ENCODE measurements at regions of chr14 and their contacts with region 1.

Region 1: GRCh38 chr14:59507063-59507780 is 22.9 kb downstream of the JKAMP start:
- DNase-seq: peak in 8 of 9 donors; percentile 9 to 47 (median 34)
- ATAC-seq: peak; percentile 90
- H3K4me3 ChIP-seq: no peak overlapping the region
- H3K4me3 Mint-ChIP-seq: no peak overlapping the region
- H3K27ac ChIP-seq: no peak overlapping the region
- H3K27ac Mint-ChIP-seq: no peak overlapping the region
- H3K4me1 ChIP-seq: peaks cover 0 to 4% of the 10 kb centered on the region in 2 donors
- H3K4me1 Mint-ChIP-seq: peaks cover 3 to 17% (median 15%) of the 10 kb centered on the region in 7 donors
- H3K27me3 ChIP-seq: no peaks in the 10 kb centered on the region
- H3K27me3 Mint-ChIP-seq: peaks cover 8 to 18% (median 13%) of the 10 kb centered on the region in 5 donors

Region 2: GRCh38 chr14:59464486-59465315 is 42.5 kb before region 1 on chr14:
- CTCF ChIA-PET with region 1: no interaction called
- POLR2A ChIA-PET with region 1: no interaction called
- intact Hi-C with region 1: loop called in 1 of 2 experiments (anchors 1 kb)
- DNase-seq: peak; percentile 40 to 71 (median 59)
- ATAC-seq: peak; percentile 78
- H3K4me3 ChIP-seq: peak overlapping the region; percentile 66
- H3K4me3 Mint-ChIP-seq: peak overlapping the region; percentile 85 to 94 (median 90)
- H3K27ac ChIP-seq: peak overlapping the region; percentile 65
- H3K27ac Mint-ChIP-seq: peak overlapping the region in 5 of 9 donors; percentile 60 to 82 (median 72)
- H3K4me1 ChIP-seq: peaks cover 0 to 9% of the 10 kb centered on the region in 2 donors
- H3K4me1 Mint-ChIP-seq: peaks cover 0 to 17% (median 7%) of the 10 kb centered on the region in 7 donors
- H3K27me3 ChIP-seq: no peaks in the 10 kb centered on the region
- H3K27me3 Mint-ChIP-seq: peaks cover 8 to 16% (median 12%) of the 10 kb centered on the region in 5 donors

Region 3: GRCh38 chr14:59478540-59478939 is 28.7 kb before region 1 on chr14:
- CTCF ChIA-PET with region 1: no interaction called
- POLR2A ChIA-PET with region 1: no interaction called
- intact Hi-C with region 1: no loop called
- DNase-seq: no peak
- ATAC-seq: no peak
- H3K4me3 ChIP-seq: no peak overlapping the region
- H3K4me3 Mint-ChIP-seq: no peak overlapping the region
- H3K27ac ChIP-seq: no peak overlapping the region
- H3K27ac Mint-ChIP-seq: no peak overlapping the region
- H3K4me1 ChIP-seq: peaks cover 12 to 13% of the 10 kb centered on the region in 2 donors
- H3K4me1 Mint-ChIP-seq: peaks cover 17 to 63% (median 57%) of the 10 kb centered on the region in 7 donors
- H3K27me3 ChIP-seq: no peaks in the 10 kb centered on the region
- H3K27me3 Mint-ChIP-seq: no peaks in the 10 kb centered on the region

Region 4: DNA sequence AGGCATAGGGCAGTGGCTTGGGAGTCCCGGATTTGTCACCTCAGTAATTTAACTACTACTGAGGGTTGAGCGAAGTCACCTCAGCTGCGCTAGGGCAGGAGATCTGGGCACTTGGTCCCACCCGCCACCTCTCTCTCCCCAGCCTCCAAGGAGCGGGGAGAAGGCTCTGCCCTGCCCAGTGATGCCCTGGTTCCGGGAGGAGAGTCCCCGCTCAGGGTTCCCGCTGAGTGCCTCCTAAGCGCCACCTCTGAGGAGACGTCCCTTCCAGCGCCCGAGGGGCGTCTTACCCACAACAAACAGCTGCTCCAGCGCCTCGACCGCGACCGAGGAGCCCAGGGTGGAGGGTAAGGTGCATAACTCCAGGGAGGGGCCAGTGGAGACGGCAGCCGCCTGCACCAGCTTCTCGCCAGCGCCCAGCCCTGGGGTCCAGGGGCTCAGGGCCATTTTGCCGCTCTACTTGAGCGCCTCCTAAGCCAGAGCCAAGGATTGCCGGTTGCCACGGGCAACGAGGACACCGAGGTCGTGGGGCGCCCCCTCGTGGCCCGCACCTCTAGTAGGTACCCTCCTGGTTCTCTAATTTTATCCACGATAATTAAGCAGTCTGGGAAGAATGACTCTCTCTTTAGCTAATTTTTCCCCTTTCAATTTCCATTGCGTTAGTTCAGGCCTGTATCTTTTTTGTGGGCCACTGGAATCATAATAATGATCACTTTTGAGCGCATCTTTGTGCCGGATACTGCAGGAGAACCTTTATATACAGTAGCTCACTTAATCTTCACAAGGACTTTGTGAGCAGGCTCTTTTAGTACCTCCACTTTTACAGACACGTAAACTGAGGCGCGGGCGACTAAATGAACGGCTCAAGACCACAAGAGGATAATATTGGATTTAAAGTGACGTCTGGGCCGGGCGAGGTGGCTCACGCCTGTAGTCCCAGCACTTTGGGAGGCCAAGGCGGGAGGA is 69.4 kb after region 1 on chr14 and contains the start of gene CCDC175:
- CTCF ChIA-PET with region 1: no interaction called
- POLR2A ChIA-PET with region 1: no interaction called
- intact Hi-C with region 1: loop called (anchors 1 kb)
- DNase-seq: peak; percentile 66 to 84 (median 78)
- ATAC-seq: peak; percentile 98
- H3K4me3 ChIP-seq: peak within 1 kb of the TSS; percentile 63
- H3K4me3 Mint-ChIP-seq: peak within 1 kb of the TSS; percentile 66 to 86 (median 78)
- H3K27ac ChIP-seq: no peak within 1 kb of the TSS
- H3K27ac Mint-ChIP-seq: peak within 1 kb of the TSS in 3 of 9 donors; percentile 8 to 26 (median 14)
- H3K4me1 ChIP-seq: peaks cover 3 to 4% of the 10 kb centered on the region in 2 donors
- H3K4me1 Mint-ChIP-seq: peaks cover 4 to 9% (median 7%) of the 10 kb centered on the region in 7 donors
- H3K27me3 ChIP-seq: no peaks in the 10 kb centered on the region
- H3K27me3 Mint-ChIP-seq: peaks cover 20 to 46% (median 29%) of the 10 kb centered on the region in 5 donors
- total RNA-seq, gene CCDC175: not detected

Region 5: DNA sequence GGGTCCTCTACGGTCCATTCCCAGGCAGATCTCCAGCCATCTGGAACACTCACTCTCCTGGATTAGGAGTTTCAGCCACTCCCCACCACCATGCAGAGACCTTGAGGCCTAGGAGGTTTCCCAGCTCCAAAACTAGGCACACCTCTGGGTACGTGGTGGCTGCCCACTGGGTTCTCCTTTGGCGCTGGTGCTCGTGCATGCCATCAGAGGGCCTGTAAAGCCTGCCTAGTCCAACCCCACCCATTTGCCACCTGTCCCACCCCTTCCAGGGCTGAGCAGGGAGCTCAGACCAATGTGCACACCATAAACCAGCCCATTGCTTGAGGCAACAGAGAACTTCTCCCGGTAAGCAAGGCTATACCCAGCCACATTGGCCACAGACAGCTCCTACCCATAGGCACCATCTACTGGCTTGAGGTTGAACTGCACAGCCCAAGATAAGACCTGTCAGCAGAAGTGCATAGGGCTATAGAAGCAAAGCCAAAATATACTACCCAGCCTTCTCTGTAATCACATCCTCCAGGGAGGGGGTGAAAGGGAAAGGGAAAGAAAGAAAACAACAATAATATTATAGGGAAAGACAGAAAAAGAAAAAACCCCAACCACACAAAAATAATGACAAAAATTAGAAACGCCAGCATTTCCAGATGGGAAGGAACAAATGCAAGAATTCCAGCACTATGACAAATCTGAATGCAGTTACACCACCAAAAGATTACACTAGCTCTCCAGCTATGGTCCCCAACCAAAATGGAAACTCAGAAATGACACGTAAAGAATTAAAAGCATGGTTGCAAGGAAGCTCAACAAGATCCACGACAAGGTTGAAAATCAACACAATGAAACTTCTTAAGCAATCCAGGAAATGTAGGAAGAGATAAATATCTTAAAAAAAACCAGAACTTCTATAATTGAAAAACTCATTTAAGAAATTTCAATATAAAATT is 181.3 kb after region 1 on chr14:
- CTCF ChIA-PET with region 1: no interaction called
- POLR2A ChIA-PET with region 1: no interaction called
- intact Hi-C with region 1: loop called in 1 of 2 experiments (anchors 5 kb)
- DNase-seq: no peak
- ATAC-seq: peak; percentile 64
- H3K4me3 ChIP-seq: no peak overlapping the region
- H3K4me3 Mint-ChIP-seq: no peak overlapping the region
- H3K27ac ChIP-seq: no peak overlapping the region
- H3K27ac Mint-ChIP-seq: no peak overlapping the region
- H3K4me1 ChIP-seq: no peaks in the 10 kb centered on the region
- H3K4me1 Mint-ChIP-seq: no peaks in the 10 kb centered on the region
- H3K27me3 ChIP-seq: no peaks in the 10 kb centered on the region
- H3K27me3 Mint-ChIP-seq: peaks cover 12 to 51% (median 29%) of the 10 kb centered on the region in 5 donors

Region 6: DNA sequence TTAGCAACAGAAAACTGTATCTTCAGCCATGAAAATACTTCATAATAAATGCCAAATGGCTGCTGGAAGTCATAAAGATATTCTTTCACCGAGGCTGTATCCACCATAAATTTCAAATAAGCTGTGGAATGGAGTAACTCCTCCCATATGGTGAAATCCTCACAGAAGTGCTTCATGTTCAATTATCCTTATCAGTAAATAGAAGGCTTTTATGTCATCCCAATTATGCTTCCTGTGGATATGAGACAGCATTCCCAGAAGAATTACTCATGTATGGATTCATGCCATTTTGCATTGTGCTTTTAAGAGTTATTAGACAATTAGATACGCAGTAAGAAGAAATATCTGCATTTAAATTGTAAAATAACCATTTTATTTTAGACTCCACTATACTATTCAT is 264.4 kb after region 1 on chr14:
- CTCF ChIA-PET with region 1: no interaction called
- POLR2A ChIA-PET with region 1: no interaction called
- intact Hi-C with region 1: no loop called
- DNase-seq: no peak
- ATAC-seq: no peak
- H3K4me3 ChIP-seq: no peak overlapping the region
- H3K4me3 Mint-ChIP-seq: no peak overlapping the region
- H3K27ac ChIP-seq: no peak overlapping the region
- H3K27ac Mint-ChIP-seq: no peak overlapping the region
- H3K4me1 ChIP-seq: no peaks in the 10 kb centered on the region
- H3K4me1 Mint-ChIP-seq: no peaks in the 10 kb centered on the region
- H3K27me3 ChIP-seq: no peaks in the 10 kb centered on the region
- H3K27me3 Mint-ChIP-seq: peaks cover 0 to 27% (median 0%) of the 10 kb centered on the region in 5 donors